Activated B cell treated with CpG ODN at 0.5 μM for 24 hours (primary cell): ENCODE measurements at regions of chr11 and their contacts with region 1.

Region 1: GRCh38 chr11:35082321-35083182 is 56.4 kb upstream of the CD44 start:
- DNase-seq: peak; percentile 69
- ATAC-seq: peak; percentile 66
- H3K4me3 Mint-ChIP-seq: peak overlapping the region; percentile 67
- H3K27ac Mint-ChIP-seq: peak overlapping the region; percentile 93
- H3K4me1 Mint-ChIP-seq: peaks cover 83% of the 10 kb centered on the region
- H3K27me3 Mint-ChIP-seq: no peaks in the 10 kb centered on the region
- CTCF ChIP-seq: no peak

Region 2: DNA sequence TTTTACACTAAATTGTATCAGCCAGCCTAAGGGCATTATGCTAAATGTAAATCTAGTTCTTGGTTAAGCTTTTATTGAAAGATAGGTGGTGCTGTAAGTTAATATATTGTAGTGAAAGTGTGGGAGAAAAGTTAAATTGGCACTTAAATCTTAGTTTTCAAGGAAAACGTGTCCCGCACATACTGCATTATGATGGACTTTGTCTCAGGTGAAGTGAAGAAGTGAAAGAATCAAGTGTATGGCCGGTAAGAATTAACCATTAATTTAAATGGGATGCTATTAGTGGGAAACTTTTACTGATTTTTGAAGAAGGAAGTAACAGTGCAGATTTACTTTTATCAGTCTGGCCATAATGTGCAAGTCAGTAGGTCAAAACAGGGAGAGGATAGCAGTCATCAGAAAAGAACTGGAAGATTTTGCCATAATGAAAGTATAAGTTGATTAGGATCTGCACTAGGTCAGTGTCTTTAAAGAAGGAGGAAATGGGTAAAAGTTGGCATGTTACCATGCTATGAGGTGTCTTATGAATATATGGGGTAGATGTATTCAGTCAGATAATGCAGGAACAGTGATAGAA is 84.5 kb before region 1 on chr11:
- CTCF ChIA-PET with region 1: interaction called, 3 read pairs
- POLR2A ChIA-PET with region 1: interaction called, 12 read pairs
- intact Hi-C with region 1: loop called (anchors 1 kb)
- DNase-seq: no peak
- ATAC-seq: peak; percentile 64
- H3K4me3 Mint-ChIP-seq: peak overlapping the region; percentile 52
- H3K27ac Mint-ChIP-seq: peak overlapping the region; percentile 77
- H3K4me1 Mint-ChIP-seq: peaks cover 31% of the 10 kb centered on the region
- H3K27me3 Mint-ChIP-seq: no peaks in the 10 kb centered on the region
- CTCF ChIP-seq: peak; percentile 58

Region 3: DNA sequence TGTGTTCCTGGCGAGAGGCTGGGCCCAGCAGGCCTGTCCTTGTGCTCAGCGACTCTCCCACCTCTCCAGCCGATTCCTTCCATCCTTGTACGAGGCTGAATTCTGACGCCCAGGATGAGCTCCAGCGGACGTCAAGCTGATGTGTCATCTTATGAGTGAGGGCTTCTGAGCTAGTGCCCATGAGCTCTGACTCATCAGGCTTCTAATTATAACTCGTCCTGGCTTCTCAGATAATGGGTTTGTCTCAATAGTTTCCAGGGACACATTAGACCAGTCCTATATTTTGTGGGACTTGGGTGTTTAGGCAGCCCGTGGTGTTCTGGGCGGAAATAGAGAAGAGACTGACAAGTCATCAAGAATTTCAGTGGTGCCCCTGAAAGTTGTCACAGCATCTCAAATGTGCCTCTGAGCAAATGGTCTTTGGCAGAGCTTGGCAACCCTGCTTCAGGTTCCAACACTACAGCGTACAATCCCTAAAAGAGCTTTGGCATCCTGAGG is 51.8 kb before region 1 on chr11:
- CTCF ChIA-PET with region 1: interaction called, 3 read pairs
- POLR2A ChIA-PET with region 1: interaction called, 22 read pairs
- intact Hi-C with region 1: loop called (anchors 1 kb)
- DNase-seq: no peak
- ATAC-seq: peak; percentile 58
- H3K4me3 Mint-ChIP-seq: peak overlapping the region; percentile 79
- H3K27ac Mint-ChIP-seq: peak overlapping the region; percentile 96
- H3K4me1 Mint-ChIP-seq: peaks cover 75% of the 10 kb centered on the region
- H3K27me3 Mint-ChIP-seq: no peaks in the 10 kb centered on the region
- CTCF ChIP-seq: no peak

Region 4: DNA sequence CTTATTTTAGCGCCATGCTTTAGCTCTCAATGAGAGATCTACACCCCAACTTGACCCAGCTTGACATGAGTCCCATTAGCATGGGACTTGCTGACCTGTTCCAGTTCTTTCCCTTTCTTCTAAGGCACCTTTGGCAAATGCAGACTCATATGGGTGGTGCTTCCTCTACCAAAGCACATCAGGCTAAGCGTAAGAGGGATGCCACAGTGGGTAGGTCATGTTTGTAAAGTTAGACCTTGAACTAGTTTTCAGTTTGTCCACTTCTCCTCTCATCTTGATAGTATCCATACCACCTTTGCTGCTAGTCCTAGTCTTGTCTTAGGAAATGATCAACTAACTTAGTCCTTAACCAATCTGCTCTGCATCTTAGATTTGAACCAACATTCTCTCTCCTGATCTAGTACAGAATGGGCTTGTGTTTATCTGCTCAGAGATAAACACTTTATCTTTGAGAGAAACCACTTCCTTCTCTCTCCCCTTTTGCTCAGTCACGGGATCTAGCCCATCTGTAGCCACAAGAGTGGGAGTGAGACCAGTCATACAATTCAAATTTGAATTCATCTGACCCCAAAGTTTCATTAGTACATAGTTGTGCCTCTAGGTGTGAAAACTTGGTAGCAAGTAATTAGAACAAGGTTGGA is 15.6 kb before region 1 on chr11:
- CTCF ChIA-PET with region 1: no interaction called
- POLR2A ChIA-PET with region 1: interaction called, 8 read pairs
- intact Hi-C with region 1: loop called (anchors 1 kb)
- DNase-seq: no peak
- ATAC-seq: peak; percentile 71
- H3K4me3 Mint-ChIP-seq: peak overlapping the region; percentile 24
- H3K27ac Mint-ChIP-seq: peak overlapping the region; percentile 78
- H3K4me1 Mint-ChIP-seq: peaks cover 52% of the 10 kb centered on the region
- H3K27me3 Mint-ChIP-seq: no peaks in the 10 kb centered on the region
- CTCF ChIP-seq: no peak

Region 5: DNA sequence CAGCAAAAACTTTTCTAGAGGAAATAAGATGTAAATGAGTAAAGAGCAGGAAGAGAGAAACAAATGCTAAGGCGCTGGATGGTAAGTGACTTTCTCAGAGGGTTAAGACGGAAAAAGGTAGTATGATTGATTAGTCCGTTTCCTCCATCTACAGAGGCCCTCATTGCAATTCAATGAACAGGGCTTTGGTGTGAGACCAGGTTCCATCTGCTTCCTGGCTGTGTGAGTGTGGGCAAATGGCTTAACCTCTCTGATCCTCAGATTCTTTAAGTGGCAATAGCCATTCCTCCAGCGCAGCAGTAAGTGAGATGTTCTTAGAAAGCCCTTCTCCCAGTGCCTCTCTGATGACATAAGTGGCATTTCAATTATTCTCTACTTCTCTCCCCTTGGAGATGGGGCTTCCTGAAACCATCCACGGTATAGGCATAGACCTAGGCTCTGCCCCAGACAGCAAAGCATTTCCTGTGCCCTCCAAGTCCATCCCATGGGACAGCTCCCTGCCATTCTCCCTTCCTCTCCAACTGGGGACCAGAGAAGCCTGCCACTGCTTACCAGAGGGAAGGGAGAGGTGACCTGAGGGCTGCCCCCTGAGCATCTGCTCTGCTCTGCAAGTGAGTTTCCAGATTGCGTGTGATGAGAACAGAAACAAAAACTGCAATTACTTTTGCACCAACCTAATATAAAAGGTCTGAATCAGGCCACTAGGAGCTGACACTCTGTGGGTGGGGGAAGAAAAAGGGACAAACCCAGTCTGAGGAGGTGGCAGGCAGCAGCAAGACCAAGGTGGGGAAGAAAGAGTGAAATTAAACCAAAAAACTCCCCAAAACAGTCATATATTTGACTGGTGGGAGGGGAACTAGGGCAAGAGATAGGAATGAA is 43.7 kb after region 1 on chr11:
- CTCF ChIA-PET with region 1: interaction called, 3 read pairs
- POLR2A ChIA-PET with region 1: interaction called, 43 read pairs
- intact Hi-C with region 1: loop called (anchors 1 kb)
- DNase-seq: peak; percentile 49
- ATAC-seq: peak; percentile 71
- H3K4me3 Mint-ChIP-seq: peak overlapping the region; percentile 76
- H3K27ac Mint-ChIP-seq: peak overlapping the region; percentile 97
- H3K4me1 Mint-ChIP-seq: peaks cover 85% of the 10 kb centered on the region
- H3K27me3 Mint-ChIP-seq: no peaks in the 10 kb centered on the region
- CTCF ChIP-seq: no peak

Region 6: DNA sequence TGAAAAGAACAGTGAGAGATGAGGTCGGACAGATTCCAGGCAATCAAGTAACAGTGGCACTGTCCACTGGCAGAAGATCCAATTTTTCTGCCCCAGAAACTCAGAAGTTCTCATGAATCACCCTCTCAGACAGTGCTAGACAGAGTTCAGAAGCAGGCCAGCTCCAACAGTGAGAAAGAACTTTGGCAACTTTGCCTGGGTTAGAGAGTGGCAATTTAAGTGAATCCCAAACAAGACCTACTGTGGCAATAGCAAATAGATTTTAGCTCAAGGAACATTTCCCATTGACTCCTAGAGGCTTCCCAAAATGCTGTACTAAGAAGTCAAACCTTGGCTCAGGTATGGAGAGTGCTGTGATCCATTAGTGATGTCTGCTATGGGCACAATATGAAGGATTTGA is 68.7 kb after region 1 on chr11:
- CTCF ChIA-PET with region 1: interaction called, 3 read pairs
- POLR2A ChIA-PET with region 1: interaction called, 17 read pairs
- intact Hi-C with region 1: no loop called
- DNase-seq: no peak
- ATAC-seq: no peak
- H3K4me3 Mint-ChIP-seq: peak overlapping the region; percentile 11
- H3K27ac Mint-ChIP-seq: peak overlapping the region; percentile 57
- H3K4me1 Mint-ChIP-seq: peaks cover 99% of the 10 kb centered on the region
- H3K27me3 Mint-ChIP-seq: no peaks in the 10 kb centered on the region
- CTCF ChIP-seq: no peak